Activated CD4-positive, alpha-beta memory T cell treated with anti-CD3 and anti-CD28 coated beads for 36 hours (primary cell): ENCODE measurements at regions of chr16 and their contacts with region 1.

Region 1: GRCh38 chr16:28277537-28278388 is 14.6 kb upstream of the SBK1 start:
- DNase-seq: peak; percentile 89
- H3K4me3 Mint-ChIP-seq: peak overlapping the region; percentile 57
- H3K27ac Mint-ChIP-seq: no peak overlapping the region
- H3K4me1 Mint-ChIP-seq: peaks cover 25% of the 10 kb centered on the region
- H3K27me3 Mint-ChIP-seq: peaks cover 6% of the 10 kb centered on the region

Region 2: DNA sequence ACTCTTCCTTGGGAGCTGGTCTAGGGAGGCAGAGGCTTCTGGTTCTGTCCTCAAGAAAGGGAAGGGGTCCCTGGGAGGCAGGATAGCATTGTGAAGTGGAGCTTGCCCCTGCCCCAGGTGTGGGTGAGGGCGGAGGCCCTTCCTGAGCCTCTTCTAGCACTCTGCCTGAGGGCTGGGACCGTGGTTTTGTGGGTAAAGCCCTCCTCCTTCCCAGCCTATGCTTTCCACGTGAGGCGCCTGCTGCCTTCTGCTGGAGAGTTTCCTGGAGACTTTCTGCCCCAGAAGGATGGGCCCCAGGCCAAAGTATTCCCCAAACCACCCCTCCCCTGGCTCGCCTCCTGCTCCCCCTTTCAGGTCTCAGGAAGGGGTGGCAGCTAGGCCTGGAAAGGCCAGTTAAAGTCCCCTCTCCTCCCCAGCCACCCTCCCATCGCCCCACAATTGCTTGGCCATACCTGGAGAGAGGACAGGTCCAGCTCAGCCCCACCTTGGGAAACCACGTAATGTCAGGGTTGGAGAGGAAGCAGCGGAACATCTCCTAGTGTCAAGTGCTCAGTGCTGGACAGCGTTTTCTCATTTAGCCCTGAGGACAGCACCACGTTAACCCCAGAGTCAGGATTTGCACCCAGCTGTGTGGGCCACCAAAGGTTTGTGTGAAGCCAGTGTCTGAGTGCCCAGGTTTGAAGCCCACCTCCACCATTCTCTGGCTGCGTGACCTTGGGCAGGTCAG is 20.2 kb after region 1 on chr16:
- CTCF ChIA-PET with region 1: interaction called, 14 read pairs
- POLR2A ChIA-PET with region 1: interaction called, 6 read pairs
- intact Hi-C with region 1: no loop called
- DNase-seq: no peak
- H3K4me3 Mint-ChIP-seq: no peak overlapping the region
- H3K27ac Mint-ChIP-seq: peak overlapping the region; percentile 51
- H3K4me1 Mint-ChIP-seq: peaks cover 46% of the 10 kb centered on the region
- H3K27me3 Mint-ChIP-seq: no peaks in the 10 kb centered on the region